ENCODE measurements at regions of chr5 and their contacts with region 1.

Region 1: GRCh38 chr5:980001-980588 is 28.5 kb upstream of the NKD2 start:
- DNase-seq: no peak
- H3K4me3 ChIP-seq: no peak overlapping the region
- H3K27me3 ChIP-seq: peaks cover 26% of the 10 kb centered on the region
- CTCF ChIP-seq: no peak

Region 2: DNA sequence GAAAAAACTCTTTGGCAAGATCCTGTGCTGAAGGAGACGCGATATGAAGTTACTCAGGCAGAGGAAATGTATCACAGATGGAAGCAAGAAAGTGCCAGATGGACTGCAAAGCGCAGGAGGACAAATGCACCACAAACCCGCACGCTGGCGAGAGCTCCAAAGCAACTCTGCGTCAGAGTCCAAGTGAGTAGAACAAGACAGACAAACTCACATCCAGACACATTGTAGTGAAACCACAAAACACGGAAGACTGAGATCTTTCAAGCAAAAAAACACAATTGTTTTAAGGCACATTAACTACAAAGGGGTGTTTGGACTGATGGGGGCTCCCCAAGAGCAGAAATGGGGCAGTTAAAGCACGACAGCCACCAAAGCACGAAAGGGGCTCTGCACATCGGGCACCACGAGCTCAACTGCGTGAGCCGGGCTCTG is 10.7 kb before region 1 on chr5:
- CTCF ChIA-PET with region 1: interaction called, 12 read pairs
- POLR2A ChIA-PET with region 1: no interaction called
- DNase-seq: no peak
- H3K4me3 ChIP-seq: no peak overlapping the region
- H3K27me3 ChIP-seq: peaks cover 43% of the 10 kb centered on the region
- CTCF ChIP-seq: no peak

Region 3: GRCh38 chr5:1751016-1751878 is 771.2 kb after region 1 on chr5:
- CTCF ChIA-PET with region 1: no interaction called
- POLR2A ChIA-PET with region 1: no interaction called
- DNase-seq: no peak
- H3K4me3 ChIP-seq: no peak overlapping the region
- H3K27me3 ChIP-seq: no peaks in the 10 kb centered on the region; the same call in 1 of the 2 replicates
- CTCF ChIP-seq: no peak

Measured in BJ (cell line).